ENCODE measurements at regions of chr6 and their contacts with region 1.

Region 1: DNA sequence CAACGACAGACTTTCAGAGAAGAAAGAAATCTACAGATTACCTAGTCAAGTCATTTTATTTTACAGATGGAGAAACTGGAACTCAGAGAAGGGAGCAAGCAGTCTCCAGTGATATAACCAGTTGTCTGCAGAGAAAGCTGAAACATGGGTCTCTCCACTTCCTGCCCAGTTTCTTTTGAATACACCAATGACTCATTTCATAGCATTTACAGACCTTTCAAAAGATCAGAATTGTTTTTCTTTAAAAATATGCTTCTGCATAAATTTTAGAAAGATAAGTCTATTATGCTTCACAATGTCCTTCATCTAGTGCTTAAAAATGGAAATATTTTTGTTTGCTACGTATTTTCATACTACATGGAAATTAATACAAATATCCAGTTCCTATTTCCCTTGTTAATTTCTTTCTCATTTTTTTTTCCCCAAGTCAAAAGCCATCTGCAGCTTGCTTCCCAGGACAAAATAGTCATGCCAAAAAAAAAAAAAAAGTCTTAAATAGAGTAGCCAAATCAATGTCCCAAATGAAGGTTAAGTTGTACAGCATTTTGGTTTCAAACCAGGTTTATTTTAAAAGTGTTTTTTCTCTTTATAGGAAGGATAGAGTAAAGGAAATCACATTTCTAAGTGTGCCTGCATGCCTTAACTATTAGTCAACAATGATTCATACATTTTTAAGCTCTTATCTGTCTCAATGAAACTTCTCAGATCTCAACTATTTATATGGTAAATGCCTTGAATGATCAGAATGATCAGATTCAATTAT is 36.9 kb downstream of the ARHGAP18 start:
- DNase-seq: no peak
- H3K4me3 ChIP-seq: no peak overlapping the region
- CTCF ChIP-seq: no peak
- POLR2A ChIP-seq: no peak

Region 2: DNA sequence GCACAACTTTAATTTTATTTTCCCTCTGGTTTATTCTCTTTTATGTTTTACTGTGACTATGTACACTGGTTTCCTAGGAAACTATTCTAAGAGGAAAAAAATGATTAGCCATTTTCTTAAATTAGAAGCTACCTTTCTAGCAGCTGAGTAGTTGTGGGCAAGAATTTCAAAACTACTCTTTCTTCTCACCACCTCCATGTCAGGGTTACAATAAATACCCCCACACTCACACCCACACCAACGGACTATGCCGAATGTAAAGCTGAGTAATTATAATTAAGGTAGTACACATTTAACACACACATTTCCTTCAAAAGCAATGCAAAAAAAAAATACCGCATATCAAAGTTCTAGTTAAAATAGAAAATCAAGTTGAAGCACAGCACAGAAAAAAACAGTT is 42.0 kb before region 1 on chr6:
- intact Hi-C with region 1: loop called (anchors 1 kb)
- DNase-seq: no peak
- H3K4me3 ChIP-seq: no peak overlapping the region
- CTCF ChIP-seq: no peak
- POLR2A ChIP-seq: no peak

Region 3: DNA sequence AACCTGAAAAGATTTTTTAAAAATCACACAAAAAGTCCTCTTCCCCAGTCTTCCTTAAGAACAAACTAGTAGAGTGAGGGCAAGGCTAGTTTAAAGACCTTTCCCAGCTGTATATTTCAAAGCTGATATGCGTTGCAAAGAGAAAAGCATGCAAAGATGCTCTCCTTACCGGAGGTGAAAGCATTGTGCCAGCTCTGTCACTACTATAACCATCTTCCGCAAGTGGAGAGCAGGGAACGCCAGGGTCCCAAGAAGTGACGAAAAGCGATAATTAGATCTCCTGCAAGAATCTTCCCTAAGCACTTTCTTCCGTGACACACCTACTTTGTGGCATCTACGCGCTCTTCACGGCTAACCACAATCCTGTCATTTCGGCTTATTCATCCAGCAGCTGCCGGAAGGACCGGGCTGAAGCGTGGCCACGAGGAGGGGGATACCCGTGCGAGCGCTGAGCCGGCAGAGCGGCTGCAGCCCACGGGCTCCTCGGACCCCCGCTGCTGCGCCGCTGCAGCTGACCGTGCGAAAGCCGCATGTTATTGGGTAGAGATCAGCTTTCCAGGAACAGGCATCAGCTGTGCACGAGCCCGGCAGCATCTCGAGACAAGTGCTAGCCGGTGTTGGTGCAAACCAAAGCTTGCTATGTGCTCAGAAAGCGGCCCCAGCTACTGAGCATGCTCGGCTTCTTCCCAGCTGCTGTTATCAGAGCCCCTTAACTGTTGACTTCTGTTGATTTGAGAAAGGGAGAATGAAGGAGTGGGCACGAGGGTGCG is 94.1 kb after region 1 on chr6:
- intact Hi-C with region 1: no loop called
- DNase-seq: no peak
- H3K4me3 ChIP-seq: no peak overlapping the region
- CTCF ChIP-seq: no peak
- POLR2A ChIP-seq: no peak

Region 4: DNA sequence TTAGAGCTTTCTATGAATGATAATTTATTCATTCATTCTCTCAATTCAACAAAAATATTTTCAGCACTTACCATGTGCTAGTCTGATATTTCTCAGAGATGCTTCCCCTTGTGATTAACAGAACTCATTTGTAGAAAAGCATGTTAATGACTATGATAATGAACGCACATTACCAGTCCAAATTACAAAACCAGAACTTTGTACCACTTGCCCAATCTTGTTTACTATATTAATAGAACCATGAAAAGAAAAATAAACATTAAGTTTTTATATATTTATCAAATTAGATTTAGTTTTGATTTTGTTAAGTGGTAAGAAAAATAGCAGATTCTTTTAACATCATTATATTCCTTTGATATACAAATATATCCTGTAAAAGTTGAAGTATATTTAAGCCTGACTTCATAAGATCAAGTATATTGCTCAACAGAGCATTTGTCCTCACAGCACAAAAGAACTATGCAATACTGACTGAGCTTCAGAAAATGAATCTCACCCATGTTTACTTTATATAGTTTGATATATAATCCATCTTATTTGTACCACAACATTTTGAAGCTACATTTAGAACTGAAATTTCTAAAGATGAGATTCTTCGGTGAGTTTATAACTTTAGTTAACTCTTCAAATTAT is 139.2 kb after region 1 on chr6:
- intact Hi-C with region 1: no loop called
- DNase-seq: no peak
- H3K4me3 ChIP-seq: no peak overlapping the region
- CTCF ChIP-seq: no peak
- POLR2A ChIP-seq: no peak